ENCODE measurements at regions of chr3 and their contacts with region 1.

Region 1: GRCh38 chr3:40580494-40581091 is 55.8 kb downstream of the ZNF621 start:
- DNase-seq: peak; percentile 54
- H3K4me3 ChIP-seq: no peak overlapping the region
- H3K27ac ChIP-seq: no peak overlapping the region
- H3K4me1 ChIP-seq: peaks cover 0 to 8% (median 0%) of the 10 kb centered on the region in 4 donors
- H3K27me3 ChIP-seq: no peaks in the 10 kb centered on the region
- CTCF ChIP-seq: peak; percentile 78 to 93 (median 91)
- EP300 ChIP-seq: no peak
- POLR2A ChIP-seq: no peak

Region 2: DNA sequence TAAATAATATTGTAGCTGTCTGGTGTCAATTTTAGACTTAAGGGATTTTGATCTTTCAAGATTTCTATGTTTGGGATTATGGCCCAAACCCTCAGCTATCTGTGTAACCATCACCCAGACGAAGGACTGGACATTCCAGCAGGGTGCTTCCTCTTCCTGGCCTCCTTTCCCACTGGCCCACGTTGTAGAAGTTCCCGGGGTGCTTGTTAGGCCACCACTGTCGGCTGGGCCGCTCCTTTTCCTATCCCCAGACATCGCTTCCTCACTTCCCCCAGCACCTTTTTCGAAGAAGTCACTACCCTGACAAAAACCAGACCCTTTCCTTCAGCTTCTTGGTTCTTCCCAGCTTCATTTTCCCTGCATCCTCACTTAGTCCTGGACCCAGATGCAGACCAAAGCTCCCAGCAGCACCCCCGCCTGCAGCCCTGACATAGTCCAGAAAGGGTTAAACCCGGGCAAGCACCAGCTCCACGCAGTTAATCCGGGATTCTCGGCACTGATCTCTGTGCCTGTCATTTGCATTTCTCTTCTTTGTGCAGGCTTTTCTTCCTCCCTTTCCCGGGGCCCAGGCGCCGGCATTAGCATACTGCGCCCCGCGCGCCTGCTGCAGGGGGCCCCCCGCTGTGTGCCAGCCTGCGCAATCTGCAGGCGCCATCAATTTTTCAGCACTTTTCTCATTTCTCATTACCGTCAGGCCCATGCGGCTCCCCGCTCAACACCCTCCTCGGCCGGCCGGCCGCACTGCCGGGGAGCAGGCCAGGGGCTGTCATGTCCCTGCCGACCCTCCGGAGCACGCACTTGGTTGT is 34.7 kb after region 1 on chr3:
- in situ Hi-C with region 1: no loop called
- intact Hi-C with region 1: no loop called
- DNase-seq: no peak
- H3K4me3 ChIP-seq: peak overlapping the region in 1 of 4 donors; percentile 11
- H3K27ac ChIP-seq: no peak overlapping the region
- H3K4me1 ChIP-seq: no peaks in the 10 kb centered on the region
- H3K27me3 ChIP-seq: peaks cover 17% of the 10 kb centered on the region
- CTCF ChIP-seq: no peak
- EP300 ChIP-seq: no peak
- POLR2A ChIP-seq: no peak

Region 3: GRCh38 chr3:40971191-40972168 is 390.9 kb after region 1 on chr3:
- in situ Hi-C with region 1: loop called in 2 of 4 experiments (anchors 25 kb)
- intact Hi-C with region 1: no loop called
- DNase-seq: peak; percentile 73
- H3K4me3 ChIP-seq: no peak overlapping the region
- H3K27ac ChIP-seq: peak overlapping the region; percentile 58 to 81 (median 74)
- H3K4me1 ChIP-seq: peaks cover 11 to 38% (median 18%) of the 10 kb centered on the region in 4 donors
- H3K27me3 ChIP-seq: no peaks in the 10 kb centered on the region
- CTCF ChIP-seq: peak in 1 of 5 experiments; percentile 2
- EP300 ChIP-seq: peak; percentile 67
- POLR2A ChIP-seq: peak; percentile 37

Region 4: GRCh38 chr3:41198950-41199865 is 618.6 kb after region 1 on chr3 and contains the start of gene CTNNB1:
- in situ Hi-C with region 1: loop called in 3 of 4 experiments (anchors 25 kb)
- intact Hi-C with region 1: no loop called
- DNase-seq: peak; percentile 95
- H3K4me3 ChIP-seq: peak within 1 kb of the TSS; percentile 64 to 97 (median 85)
- H3K27ac ChIP-seq: peak within 1 kb of the TSS; percentile 94 to 100 (median 96)
- H3K4me1 ChIP-seq: peaks cover 13 to 33% (median 20%) of the 10 kb centered on the region in 4 donors
- H3K27me3 ChIP-seq: no peaks in the 10 kb centered on the region
- CTCF ChIP-seq: peak in 2 of 5 experiments; percentile 11 to 21
- EP300 ChIP-seq: peak; percentile 64
- POLR2A ChIP-seq: peak; percentile 100
- total RNA-seq, gene CTNNB1: 290 to 527 (median 414) TPM

Region 5: GRCh38 chr3:41716471-41716870 is 1135.9 kb after region 1 on chr3:
- in situ Hi-C with region 1: loop called in 2 of 4 experiments (anchors 25 kb)
- intact Hi-C with region 1: no loop called
- DNase-seq: no peak
- H3K4me3 ChIP-seq: no peak overlapping the region
- H3K27ac ChIP-seq: no peak overlapping the region
- H3K4me1 ChIP-seq: no peaks in the 10 kb centered on the region
- H3K27me3 ChIP-seq: no peaks in the 10 kb centered on the region
- CTCF ChIP-seq: peak in 4 of 5 experiments; percentile 19 to 43 (median 28)
- EP300 ChIP-seq: no peak
- POLR2A ChIP-seq: no peak

Region 6: GRCh38 chr3:41881233-41881821 is 1300.7 kb after region 1 on chr3:
- in situ Hi-C with region 1: loop called (anchors 5 to 10 kb)
- intact Hi-C with region 1: loop called (anchors 5 kb)
- DNase-seq: no peak
- H3K4me3 ChIP-seq: no peak overlapping the region
- H3K27ac ChIP-seq: no peak overlapping the region
- H3K4me1 ChIP-seq: no peaks in the 10 kb centered on the region
- H3K27me3 ChIP-seq: no peaks in the 10 kb centered on the region
- CTCF ChIP-seq: peak; percentile 68 to 78 (median 71)
- EP300 ChIP-seq: no peak
- POLR2A ChIP-seq: no peak